CD8-positive, alpha-beta T cell (primary cell): ENCODE measurements at regions of chr14 and their contacts with region 1.

Region 1: GRCh38 chr14:70809543-70810244 is 381 bp upstream of the MAP3K9 start:
- DNase-seq: peak; percentile 70 to 95 (median 87)
- ATAC-seq: peak; percentile 79
- H3K4me3 ChIP-seq: peak overlapping the region; percentile 58 to 65
- H3K4me3 Mint-ChIP-seq: no peak overlapping the region
- H3K27ac ChIP-seq: peak overlapping the region; percentile 30 to 56
- H3K27ac Mint-ChIP-seq: peak overlapping the region; percentile 80
- H3K4me1 ChIP-seq: peaks cover 12% of the 10 kb centered on the region
- H3K4me1 Mint-ChIP-seq: peaks cover 10% of the 10 kb centered on the region
- H3K27me3 ChIP-seq: no peaks in the 10 kb centered on the region
- H3K27me3 Mint-ChIP-seq: no peaks in the 10 kb centered on the region
- CTCF ChIP-seq: no peak

Region 2: DNA sequence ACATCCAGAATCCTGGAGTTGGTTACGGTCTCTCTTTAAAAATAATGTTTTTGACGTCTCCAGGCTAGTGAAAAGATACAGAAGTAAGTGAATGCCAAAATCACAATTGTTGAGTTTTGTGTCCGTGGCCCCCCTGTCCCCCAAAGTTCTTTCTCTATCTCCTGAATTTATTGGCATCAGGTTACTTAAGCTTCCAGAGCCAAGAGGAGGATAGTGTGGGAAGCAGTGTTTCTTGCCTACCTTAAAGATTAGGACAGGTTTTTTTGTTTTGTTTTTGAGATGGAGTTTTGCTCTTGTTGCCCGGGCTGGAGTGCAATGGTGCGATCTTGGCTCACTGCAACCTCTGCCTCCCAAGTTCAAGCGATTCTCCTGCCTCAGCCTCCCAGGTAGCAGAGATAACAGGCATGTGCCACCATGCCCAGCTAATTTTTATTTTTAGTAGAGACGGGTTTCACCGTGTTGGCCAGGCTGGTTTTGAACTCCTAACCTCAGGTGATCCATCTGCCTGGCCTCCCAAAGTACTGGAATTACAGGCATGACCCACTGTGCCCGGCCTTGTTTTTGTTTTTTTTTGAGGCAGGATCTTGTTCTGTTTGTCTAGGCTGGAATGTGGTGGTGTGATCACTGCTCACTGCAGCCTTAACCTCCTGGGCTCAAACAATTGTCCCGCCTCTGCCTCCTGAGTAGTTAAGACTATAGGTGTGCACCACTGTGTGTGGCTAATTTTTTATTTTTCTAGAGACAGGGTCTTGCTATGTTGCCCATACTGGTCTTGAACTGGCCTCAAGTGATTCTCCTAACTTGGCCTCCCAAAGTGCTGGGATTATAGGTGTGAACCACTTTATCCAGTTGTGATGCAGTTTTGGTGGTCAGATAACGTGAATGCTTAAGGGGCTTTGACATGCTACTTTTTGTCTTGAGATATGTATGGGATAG is 1037.3 kb before region 1 on chr14:
- CTCF ChIA-PET with region 1: no interaction called
- POLR2A ChIA-PET with region 1: no interaction called
- intact Hi-C with region 1: loop called in 1 of 2 experiments (anchors 10 kb)
- DNase-seq: peak in 1 of 9 experiments; percentile 34
- ATAC-seq: peak; percentile 16
- H3K4me3 ChIP-seq: no peak overlapping the region
- H3K4me3 Mint-ChIP-seq: no peak overlapping the region
- H3K27ac ChIP-seq: no peak overlapping the region
- H3K27ac Mint-ChIP-seq: peak overlapping the region; percentile 37
- H3K4me1 ChIP-seq: peaks cover 65% of the 10 kb centered on the region
- H3K4me1 Mint-ChIP-seq: peaks cover 86% of the 10 kb centered on the region
- H3K27me3 ChIP-seq: no peaks in the 10 kb centered on the region
- H3K27me3 Mint-ChIP-seq: no peaks in the 10 kb centered on the region
- CTCF ChIP-seq: no peak

Region 3: DNA sequence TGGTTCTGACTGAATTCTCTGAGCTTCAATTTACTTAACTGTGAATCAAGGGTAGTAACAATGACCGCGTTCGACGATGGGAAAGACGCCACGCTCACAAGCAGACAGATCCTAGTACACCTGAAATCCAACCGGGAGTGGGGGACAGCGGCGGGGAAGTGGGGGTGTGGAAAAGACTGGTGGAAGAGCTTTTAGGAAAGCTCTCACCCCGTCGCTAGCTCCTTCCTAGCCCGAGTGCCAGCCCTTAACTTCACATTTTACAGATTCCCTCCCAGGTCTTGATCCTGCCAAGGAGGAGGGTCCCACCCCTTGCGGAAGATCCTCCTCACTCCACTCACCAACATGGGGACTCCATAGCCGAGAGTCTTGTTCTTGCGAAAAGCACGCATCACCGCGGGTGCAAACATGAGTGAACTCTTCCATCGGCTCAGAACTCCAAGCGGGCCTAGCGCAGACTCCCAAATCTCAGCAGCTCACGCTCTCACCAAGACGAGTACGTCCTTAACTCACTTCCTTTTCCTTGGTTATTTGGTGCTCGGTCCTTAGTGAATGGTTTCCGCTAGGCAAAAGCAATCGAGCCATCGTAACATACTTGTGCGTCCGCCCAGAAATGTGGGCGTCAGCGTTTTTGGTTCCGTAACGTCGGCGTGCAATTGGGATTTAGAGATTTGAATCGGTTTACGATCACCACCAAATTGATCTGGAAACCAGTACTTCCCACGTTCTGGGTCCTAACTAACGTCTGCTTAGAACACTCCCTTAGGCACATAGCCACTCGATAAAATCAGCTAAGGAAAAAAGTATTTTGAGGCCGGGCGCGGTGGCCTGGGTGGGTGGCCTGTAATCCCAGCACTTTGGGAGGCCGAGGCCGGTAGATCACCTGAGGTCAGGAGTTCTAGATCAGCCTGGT is 450.3 kb before region 1 on chr14 and contains the start of gene COX16:
- CTCF ChIA-PET with region 1: no interaction called
- POLR2A ChIA-PET with region 1: no interaction called
- intact Hi-C with region 1: loop called in 1 of 2 experiments (anchors 5 kb)
- DNase-seq: peak; percentile 65 to 94 (median 79)
- ATAC-seq: peak; percentile 95
- H3K4me3 ChIP-seq: peak within 1 kb of the TSS; percentile 84 to 87
- H3K4me3 Mint-ChIP-seq: peak within 1 kb of the TSS; percentile 99
- H3K27ac ChIP-seq: peak within 1 kb of the TSS; percentile 56 to 75
- H3K27ac Mint-ChIP-seq: peak within 1 kb of the TSS; percentile 94
- H3K4me1 ChIP-seq: peaks cover 17% of the 10 kb centered on the region
- H3K4me1 Mint-ChIP-seq: peaks cover 47% of the 10 kb centered on the region
- H3K27me3 ChIP-seq: no peaks in the 10 kb centered on the region
- H3K27me3 Mint-ChIP-seq: no peaks in the 10 kb centered on the region
- CTCF ChIP-seq: no peak
- total RNA-seq, gene COX16: 15.4 to 22.4 TPM

Region 4: GRCh38 chr14:70600382-70601157 is 209.1 kb before region 1 on chr14 and contains the start of gene MED6:
- CTCF ChIA-PET with region 1: interaction called, 3 read pairs
- POLR2A ChIA-PET with region 1: no interaction called
- intact Hi-C with region 1: loop called in 1 of 2 experiments (anchors 2 kb)
- DNase-seq: peak; percentile 83 to 96 (median 94)
- ATAC-seq: peak; percentile 100
- H3K4me3 ChIP-seq: peak within 1 kb of the TSS; percentile 90 to 99
- H3K4me3 Mint-ChIP-seq: peak within 1 kb of the TSS; percentile 99
- H3K27ac ChIP-seq: peak within 1 kb of the TSS; percentile 92 to 96
- H3K27ac Mint-ChIP-seq: peak within 1 kb of the TSS; percentile 99
- H3K4me1 ChIP-seq: peaks cover 20% of the 10 kb centered on the region
- H3K4me1 Mint-ChIP-seq: peaks cover 30% of the 10 kb centered on the region
- H3K27me3 ChIP-seq: no peaks in the 10 kb centered on the region
- H3K27me3 Mint-ChIP-seq: no peaks in the 10 kb centered on the region
- CTCF ChIP-seq: no peak
- total RNA-seq, gene MED6: 116 to 119 TPM

Region 5: GRCh38 chr14:70655110-70655826 is 154.4 kb before region 1 on chr14:
- CTCF ChIA-PET with region 1: interaction called, 4 read pairs
- POLR2A ChIA-PET with region 1: interaction called, 3 read pairs
- intact Hi-C with region 1: loop called in 1 of 2 experiments (anchors 1 kb)
- DNase-seq: peak; percentile 31 to 91 (median 79)
- ATAC-seq: peak; percentile 88
- H3K4me3 ChIP-seq: peak overlapping the region; percentile 32 to 46
- H3K4me3 Mint-ChIP-seq: peak overlapping the region; percentile 86
- H3K27ac ChIP-seq: peak overlapping the region; percentile 76 to 90
- H3K27ac Mint-ChIP-seq: peak overlapping the region; percentile 99
- H3K4me1 ChIP-seq: peaks cover 91% of the 10 kb centered on the region
- H3K4me1 Mint-ChIP-seq: peaks cover 93% of the 10 kb centered on the region
- H3K27me3 ChIP-seq: no peaks in the 10 kb centered on the region
- H3K27me3 Mint-ChIP-seq: no peaks in the 10 kb centered on the region
- CTCF ChIP-seq: no peak

Region 6: DNA sequence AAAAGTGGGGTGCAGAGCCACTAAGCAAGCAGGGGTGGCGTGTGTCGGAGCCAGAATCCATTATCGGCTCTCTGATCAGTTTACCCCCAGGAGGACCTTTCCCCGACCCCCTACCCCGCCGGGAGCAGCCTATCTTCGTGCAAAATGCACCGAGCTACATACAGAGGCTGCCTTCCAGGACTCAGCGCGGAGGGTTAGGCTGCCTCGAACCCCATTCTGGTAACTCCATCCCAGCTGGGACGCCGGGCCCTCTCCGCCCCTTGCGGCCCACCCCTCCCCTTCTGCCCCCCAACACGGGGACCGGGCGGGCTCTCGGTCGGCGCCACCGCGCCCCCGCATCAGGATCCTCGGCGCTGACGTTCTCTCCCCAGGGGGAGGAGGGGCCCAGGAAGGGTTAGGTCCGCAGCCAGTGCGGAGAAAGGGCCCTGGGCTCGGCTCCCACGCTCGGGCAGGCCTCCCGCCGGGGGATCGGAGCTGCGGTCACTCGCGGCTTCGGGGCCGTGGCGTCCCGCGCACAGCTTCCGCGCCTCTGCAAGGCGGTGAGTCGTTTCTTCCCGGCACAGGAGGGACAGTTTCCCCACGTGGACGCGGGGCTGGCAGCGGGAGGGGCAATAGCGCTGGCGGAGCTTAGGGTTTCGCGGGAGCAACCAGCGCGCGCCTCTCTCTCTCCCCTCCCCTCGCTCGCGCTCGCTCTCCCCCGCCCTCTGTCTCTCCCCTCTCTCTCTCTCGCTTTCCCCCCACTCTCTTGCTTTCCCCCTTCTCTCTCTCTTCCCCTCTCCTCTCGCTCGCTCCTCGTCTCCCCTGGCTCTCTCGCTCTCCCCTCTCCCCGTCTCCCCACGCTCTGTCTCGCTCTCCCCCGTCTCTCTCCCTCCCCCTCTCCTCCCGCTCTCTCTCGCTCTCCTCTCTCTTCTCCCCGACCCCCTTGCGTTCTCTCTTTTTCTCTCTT is 12.2 kb after region 1 on chr14:
- CTCF ChIA-PET with region 1: interaction called, 25 read pairs
- POLR2A ChIA-PET with region 1: interaction called, 13 read pairs
- intact Hi-C with region 1: loop called in 1 of 2 experiments (anchors 1 kb)
- DNase-seq: peak in 8 of 9 experiments; percentile 35 to 73 (median 58)
- ATAC-seq: peak; percentile 39
- H3K4me3 ChIP-seq: peak overlapping the region; percentile 57 to 67
- H3K4me3 Mint-ChIP-seq: peak overlapping the region; percentile 76
- H3K27ac ChIP-seq: peak overlapping the region in 1 of 2 experiments; percentile 15
- H3K27ac Mint-ChIP-seq: no peak overlapping the region
- H3K4me1 ChIP-seq: peaks cover 17% of the 10 kb centered on the region
- H3K4me1 Mint-ChIP-seq: peaks cover 16% of the 10 kb centered on the region
- H3K27me3 ChIP-seq: no peaks in the 10 kb centered on the region
- H3K27me3 Mint-ChIP-seq: peaks cover 7% of the 10 kb centered on the region
- CTCF ChIP-seq: no peak

Region 7: DNA sequence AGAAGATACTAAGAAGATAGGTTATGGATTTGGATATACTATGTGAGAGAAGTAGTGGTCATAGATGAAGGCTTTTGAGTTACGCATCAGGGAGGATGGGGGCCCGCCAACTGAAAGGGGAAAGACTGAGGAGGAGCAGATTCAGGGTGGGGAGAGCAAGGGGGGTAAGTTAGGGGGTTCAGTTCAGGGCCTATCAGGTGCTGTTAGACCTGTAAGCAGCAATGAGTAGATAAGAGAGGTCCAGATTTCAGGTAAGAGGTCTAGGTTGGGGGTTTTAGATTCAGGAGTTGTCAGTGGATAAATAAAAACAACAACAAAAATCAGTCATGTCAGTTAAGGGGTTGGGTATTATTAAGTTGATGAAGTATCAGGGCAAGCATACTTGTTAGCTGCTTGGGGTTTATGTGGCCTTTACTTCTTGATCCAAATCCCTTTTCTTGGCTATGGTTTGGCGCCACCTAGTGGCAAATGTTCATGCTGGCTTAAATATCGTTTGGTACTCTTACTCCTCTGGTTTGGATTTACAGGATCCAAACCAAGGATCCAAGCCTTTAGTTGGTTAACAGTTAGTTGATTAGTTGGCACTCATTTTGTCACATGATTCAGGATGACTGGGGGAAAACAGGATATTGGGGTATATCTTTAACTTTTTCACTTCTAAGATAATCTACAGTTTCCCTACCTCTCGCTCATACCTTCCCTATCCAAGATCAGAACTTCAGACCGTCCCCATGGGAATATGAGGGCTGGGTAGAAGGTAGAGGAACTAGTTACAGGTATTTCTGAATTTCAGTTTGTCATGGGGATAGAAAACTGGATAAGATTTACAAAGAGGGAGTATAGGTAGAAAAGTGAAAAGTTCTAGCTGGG is 162.6 kb after region 1 on chr14:
- CTCF ChIA-PET with region 1: interaction called, 38 read pairs
- POLR2A ChIA-PET with region 1: no interaction called
- intact Hi-C with region 1: no loop called
- DNase-seq: peak; percentile 65 to 90 (median 85)
- ATAC-seq: peak; percentile 81
- H3K4me3 ChIP-seq: no peak overlapping the region
- H3K4me3 Mint-ChIP-seq: no peak overlapping the region
- H3K27ac ChIP-seq: peak overlapping the region in 1 of 2 experiments; percentile 0
- H3K27ac Mint-ChIP-seq: peak overlapping the region; percentile 53
- H3K4me1 ChIP-seq: peaks cover 25% of the 10 kb centered on the region
- H3K4me1 Mint-ChIP-seq: peaks cover 48% of the 10 kb centered on the region
- H3K27me3 ChIP-seq: no peaks in the 10 kb centered on the region
- H3K27me3 Mint-ChIP-seq: no peaks in the 10 kb centered on the region
- CTCF ChIP-seq: peak; percentile 81